Activated naive CD4-positive, alpha-beta T cell treated with anti-CD3 and anti-CD28 coated beads for 36 hours (primary cell): ENCODE measurements at regions of chr3 and their contacts with region 1.

Region 1: GRCh38 chr3:13452490-13453335 is 27.4 kb upstream of the HDAC11 start:
- DNase-seq: peak; percentile 67
- H3K4me3 Mint-ChIP-seq: peak overlapping the region; percentile 91
- H3K27ac Mint-ChIP-seq: peak overlapping the region; percentile 93
- H3K4me1 Mint-ChIP-seq: peaks cover 24% of the 10 kb centered on the region
- H3K27me3 Mint-ChIP-seq: no peaks in the 10 kb centered on the region

Region 2: DNA sequence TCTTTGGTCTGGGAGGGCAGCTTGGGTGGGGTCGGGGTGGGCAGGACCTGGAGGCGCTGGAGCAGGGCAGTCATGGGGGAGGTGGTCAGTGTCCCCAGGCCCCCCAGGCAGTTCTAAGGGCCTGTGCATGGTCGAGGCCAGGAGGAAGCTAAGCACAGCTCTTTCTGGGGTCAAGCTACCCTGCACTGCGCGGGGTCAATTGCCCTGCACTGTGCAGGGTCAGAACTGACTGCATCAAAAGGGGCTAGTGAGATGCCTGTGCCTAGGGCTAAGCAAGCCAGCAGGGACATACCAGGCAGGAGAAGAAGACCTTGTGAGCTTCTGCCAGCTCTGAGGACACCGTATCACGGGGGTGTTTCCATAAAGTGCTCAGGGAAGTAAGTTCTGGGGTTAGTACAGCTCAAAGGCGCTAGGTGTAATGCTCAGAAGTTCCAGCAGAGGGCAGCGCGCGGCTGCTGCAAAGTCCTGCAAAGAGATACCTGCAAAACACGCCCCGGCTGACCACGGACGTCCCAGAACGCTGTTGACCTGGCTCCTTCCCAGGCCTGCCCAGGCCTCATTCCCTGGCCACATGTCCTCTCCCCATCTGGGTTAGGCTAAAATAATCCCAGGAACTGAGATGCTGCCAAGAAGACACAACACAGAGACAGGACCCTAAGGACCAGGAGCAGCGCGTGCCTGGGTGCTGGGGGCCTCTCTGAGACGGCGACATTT is 360.7 kb before region 1 on chr3:
- CTCF ChIA-PET with region 1: interaction called, 44 read pairs
- intact Hi-C with region 1: loop called (anchors 1 kb)
- DNase-seq: peak; percentile 89
- H3K4me3 Mint-ChIP-seq: no peak overlapping the region
- H3K27ac Mint-ChIP-seq: no peak overlapping the region
- H3K4me1 Mint-ChIP-seq: peaks cover 5% of the 10 kb centered on the region
- H3K27me3 Mint-ChIP-seq: no peaks in the 10 kb centered on the region

Region 3: DNA sequence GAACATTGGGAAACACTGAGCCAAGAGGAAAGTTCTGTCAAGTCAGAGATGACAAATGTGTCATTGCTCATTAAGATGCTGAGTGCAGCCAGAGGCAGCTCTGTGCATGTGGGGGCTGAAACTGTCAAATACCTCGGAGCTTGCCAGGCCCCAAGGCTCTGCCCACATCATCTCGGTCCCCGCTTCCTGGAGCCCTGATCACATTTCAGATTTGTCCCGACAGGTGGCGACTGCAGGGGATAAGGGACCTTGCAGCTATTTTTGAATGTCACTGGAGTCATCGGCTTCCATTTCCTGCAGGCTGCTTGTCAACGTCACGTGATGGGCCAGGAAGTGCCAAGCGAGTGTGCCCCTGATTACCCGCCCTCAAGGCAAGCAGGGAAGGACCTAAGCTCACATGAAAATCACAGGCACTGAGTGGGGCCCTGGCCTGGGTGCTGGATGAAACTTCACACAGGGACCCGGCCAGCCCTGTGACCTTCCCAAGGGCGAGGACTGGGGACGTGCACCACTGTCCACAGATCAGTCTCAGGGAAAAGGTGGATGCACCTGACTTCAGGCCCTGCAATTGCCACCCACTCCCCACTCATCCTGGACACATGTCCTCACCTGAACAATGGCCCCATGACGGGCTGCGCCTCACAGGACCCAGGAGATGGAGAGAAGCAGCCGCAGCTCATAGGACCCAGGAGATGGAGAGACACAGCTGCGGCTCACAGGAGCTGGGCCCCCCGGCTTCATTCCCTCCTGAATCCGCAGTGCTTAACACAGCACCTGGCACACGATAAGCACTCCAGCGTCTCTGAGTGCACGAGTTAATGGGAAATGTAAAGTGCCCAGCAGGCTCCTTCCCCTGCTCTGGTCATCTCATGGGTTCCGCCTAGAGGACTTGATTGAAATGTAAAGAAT is 106.0 kb before region 1 on chr3:
- CTCF ChIA-PET with region 1: interaction called, 84 read pairs
- intact Hi-C with region 1: loop called (anchors 1 kb)
- DNase-seq: peak; percentile 93
- H3K4me3 Mint-ChIP-seq: no peak overlapping the region
- H3K27ac Mint-ChIP-seq: peak overlapping the region; percentile 81
- H3K4me1 Mint-ChIP-seq: peaks cover 56% of the 10 kb centered on the region
- H3K27me3 Mint-ChIP-seq: no peaks in the 10 kb centered on the region

Region 4: GRCh38 chr3:13405614-13406013 is 47.1 kb before region 1 on chr3:
- CTCF ChIA-PET with region 1: interaction called, 28 read pairs
- intact Hi-C with region 1: no loop called
- DNase-seq: no peak
- H3K4me3 Mint-ChIP-seq: no peak overlapping the region
- H3K27ac Mint-ChIP-seq: no peak overlapping the region
- H3K4me1 Mint-ChIP-seq: peaks cover 34% of the 10 kb centered on the region
- H3K27me3 Mint-ChIP-seq: no peaks in the 10 kb centered on the region

Region 5: DNA sequence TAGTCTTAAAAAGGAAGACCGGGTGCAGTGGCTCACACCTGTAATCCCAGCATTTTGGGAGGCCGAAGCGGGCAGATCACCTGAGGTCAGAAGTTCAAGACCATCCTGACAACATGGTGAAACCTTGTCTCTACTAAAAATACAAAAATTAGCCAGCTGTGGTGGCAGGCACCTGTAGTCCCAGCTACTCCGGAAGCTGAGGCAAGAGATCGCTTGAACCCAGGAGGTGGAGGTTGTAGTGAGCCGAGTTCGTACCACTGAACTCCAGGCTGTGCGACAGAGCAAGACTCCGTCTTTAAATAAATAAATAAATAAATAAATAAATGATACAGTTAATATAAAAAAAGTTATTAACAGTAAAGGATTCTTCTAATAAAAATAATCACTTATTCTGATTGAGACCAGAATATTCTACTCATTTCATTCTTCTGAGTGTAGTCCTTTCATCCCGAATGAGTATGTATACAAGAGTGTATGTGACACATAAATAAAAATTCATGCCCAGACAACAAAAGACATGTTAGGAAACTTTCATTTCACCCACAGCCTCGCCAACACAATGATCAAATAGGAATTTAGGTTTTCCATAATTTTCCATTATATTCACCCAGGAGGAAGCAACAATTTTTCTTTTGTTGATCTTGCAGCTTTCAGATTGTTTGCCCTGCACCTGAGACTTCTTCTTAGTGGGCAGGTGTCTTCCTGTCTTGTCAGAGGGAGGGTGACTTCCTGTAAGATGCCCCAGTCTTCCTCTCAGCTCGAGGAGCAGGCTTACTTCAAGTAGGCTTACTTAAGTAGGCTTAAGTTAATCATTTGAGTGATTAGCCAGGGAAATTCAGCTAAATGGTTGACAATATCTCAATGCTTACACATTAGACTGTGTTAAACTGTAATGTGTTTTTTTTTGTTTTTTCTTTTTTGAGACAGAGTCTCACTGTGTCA is 24.8 kb before region 1 on chr3:
- CTCF ChIA-PET with region 1: interaction called, 16 read pairs
- intact Hi-C with region 1: no loop called
- DNase-seq: peak; percentile 71
- H3K4me3 Mint-ChIP-seq: peak overlapping the region; percentile 45
- H3K27ac Mint-ChIP-seq: peak overlapping the region; percentile 88
- H3K4me1 Mint-ChIP-seq: peaks cover 52% of the 10 kb centered on the region
- H3K27me3 Mint-ChIP-seq: no peaks in the 10 kb centered on the region